Activated CD4-positive, alpha-beta memory T cell treated with anti-CD3 and anti-CD28 coated beads for 36 hours (primary cell): ENCODE measurements at regions of chr6 and their contacts with region 1.

Region 1: DNA sequence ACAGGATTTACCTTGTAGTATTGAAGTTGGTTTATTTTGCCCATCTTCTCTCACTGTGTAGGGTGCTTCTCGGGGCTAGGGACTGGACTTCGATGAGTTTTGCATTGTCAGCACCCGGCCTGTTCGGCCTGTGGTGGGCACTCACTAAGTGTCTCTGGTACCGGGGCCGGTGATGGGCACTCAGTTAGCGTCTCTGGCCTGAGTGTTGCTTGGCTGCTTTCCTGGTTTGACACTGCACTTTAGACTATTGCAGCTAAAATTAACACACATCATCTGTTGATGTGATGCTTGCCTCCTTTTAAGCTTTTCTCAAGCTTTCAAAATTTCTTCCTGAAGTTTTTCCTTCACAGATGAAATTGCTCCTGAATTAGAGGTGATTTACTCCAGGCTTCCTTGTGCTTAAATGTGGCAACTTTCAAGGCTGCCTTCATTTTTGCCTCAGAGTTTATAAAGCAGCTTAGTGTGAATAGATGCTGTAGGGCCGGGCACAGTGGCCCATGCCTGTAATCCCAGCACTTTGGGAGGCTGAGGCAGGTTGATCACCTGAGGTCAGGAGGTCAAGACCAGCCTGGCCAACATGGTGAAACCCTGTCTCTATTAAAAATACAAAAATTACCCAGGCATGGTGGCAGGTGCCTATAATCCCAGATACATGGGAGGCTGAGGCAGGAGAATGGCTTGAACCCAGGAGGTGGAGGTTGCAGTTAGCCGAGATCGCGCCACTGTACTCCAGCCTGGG is 41.7 kb upstream of the TULP4 start:
- DNase-seq: peak; percentile 46
- H3K4me3 Mint-ChIP-seq: no peak overlapping the region
- H3K27ac Mint-ChIP-seq: no peak overlapping the region
- H3K4me1 Mint-ChIP-seq: peaks cover 27% of the 10 kb centered on the region
- H3K27me3 Mint-ChIP-seq: no peaks in the 10 kb centered on the region

Region 2: GRCh38 chr6:156557251-156557910 is 1713.2 kb before region 1 on chr6:
- CTCF ChIA-PET with region 1: no interaction called
- POLR2A ChIA-PET with region 1: no interaction called
- intact Hi-C with region 1: no loop called
- DNase-seq: no peak
- H3K4me3 Mint-ChIP-seq: no peak overlapping the region
- H3K27ac Mint-ChIP-seq: no peak overlapping the region
- H3K4me1 Mint-ChIP-seq: no peaks in the 10 kb centered on the region
- H3K27me3 Mint-ChIP-seq: peaks cover 7% of the 10 kb centered on the region

Region 3: DNA sequence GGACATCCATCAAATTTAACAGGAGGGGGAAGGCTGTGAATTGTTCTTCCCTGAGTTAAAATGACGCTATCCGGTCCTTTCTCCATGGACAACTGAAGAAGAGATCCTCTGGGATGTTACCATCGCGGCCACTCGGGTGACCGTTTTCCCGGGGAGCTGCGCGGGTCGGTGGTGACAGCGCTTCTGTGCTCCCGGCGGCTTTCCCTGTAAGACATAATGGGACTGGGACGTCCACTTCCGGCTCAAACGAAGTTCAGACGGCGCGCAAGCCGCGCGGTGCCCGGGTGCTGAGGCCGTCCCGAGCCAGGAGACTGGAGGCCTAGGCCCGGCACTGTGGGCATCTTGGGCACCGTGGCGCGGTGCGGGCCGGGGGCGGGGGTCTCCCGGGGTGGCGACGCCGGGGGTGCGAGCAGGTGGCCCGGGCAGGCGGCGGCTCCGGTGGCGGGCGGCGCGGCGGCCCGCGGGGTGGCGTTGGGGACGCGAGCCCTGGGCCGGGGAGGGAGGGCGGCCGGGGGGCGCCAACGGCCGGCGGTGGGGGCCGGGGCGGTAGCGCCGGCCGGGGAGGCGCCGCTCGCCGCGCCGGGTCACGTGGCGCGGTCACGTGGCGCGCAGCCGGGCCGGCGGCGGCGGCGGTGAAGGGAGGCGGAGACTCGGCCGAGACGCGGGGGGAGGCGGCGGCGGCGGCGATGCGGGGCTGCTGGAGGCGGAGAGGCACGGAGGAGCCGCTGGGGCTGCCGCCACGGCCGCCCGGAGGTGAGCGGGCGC is 38.8 kb before region 1 on chr6:
- CTCF ChIA-PET with region 1: no interaction called
- POLR2A ChIA-PET with region 1: no interaction called
- intact Hi-C with region 1: loop called (anchors 2 kb)
- DNase-seq: peak; percentile 76
- H3K4me3 Mint-ChIP-seq: peak overlapping the region; percentile 81
- H3K27ac Mint-ChIP-seq: peak overlapping the region; percentile 46
- H3K4me1 Mint-ChIP-seq: peaks cover 31% of the 10 kb centered on the region
- H3K27me3 Mint-ChIP-seq: no peaks in the 10 kb centered on the region

Region 4: GRCh38 chr6:158283304-158283980 is 12.9 kb after region 1 on chr6:
- CTCF ChIA-PET with region 1: no interaction called
- POLR2A ChIA-PET with region 1: no interaction called
- intact Hi-C with region 1: loop called (anchors 1 kb)
- DNase-seq: peak; percentile 50
- H3K4me3 Mint-ChIP-seq: peak overlapping the region; percentile 1
- H3K27ac Mint-ChIP-seq: peak overlapping the region; percentile 28
- H3K4me1 Mint-ChIP-seq: peaks cover 37% of the 10 kb centered on the region
- H3K27me3 Mint-ChIP-seq: no peaks in the 10 kb centered on the region

Region 5: GRCh38 chr6:158290659-158291058 is 20.1 kb after region 1 on chr6:
- CTCF ChIA-PET with region 1: interaction called, 3 read pairs
- POLR2A ChIA-PET with region 1: no interaction called
- intact Hi-C with region 1: loop called (anchors 1 kb)
- DNase-seq: peak; percentile 75
- H3K4me3 Mint-ChIP-seq: peak overlapping the region; percentile 50
- H3K27ac Mint-ChIP-seq: peak overlapping the region; percentile 79
- H3K4me1 Mint-ChIP-seq: peaks cover 37% of the 10 kb centered on the region
- H3K27me3 Mint-ChIP-seq: no peaks in the 10 kb centered on the region

Region 6: GRCh38 chr6:158322724-158323560 is 52.4 kb after region 1 on chr6:
- CTCF ChIA-PET with region 1: no interaction called
- POLR2A ChIA-PET with region 1: no interaction called
- intact Hi-C with region 1: loop called (anchors 5 kb)
- DNase-seq: no peak
- H3K4me3 Mint-ChIP-seq: no peak overlapping the region
- H3K27ac Mint-ChIP-seq: no peak overlapping the region
- H3K4me1 Mint-ChIP-seq: peaks cover 49% of the 10 kb centered on the region
- H3K27me3 Mint-ChIP-seq: no peaks in the 10 kb centered on the region

Region 7: GRCh38 chr6:158344534-158344933 is 74.0 kb after region 1 on chr6:
- CTCF ChIA-PET with region 1: no interaction called
- POLR2A ChIA-PET with region 1: interaction called, 5 read pairs
- intact Hi-C with region 1: loop called (anchors 5 kb)
- DNase-seq: peak; percentile 66
- H3K4me3 Mint-ChIP-seq: no peak overlapping the region
- H3K27ac Mint-ChIP-seq: peak overlapping the region; percentile 9
- H3K4me1 Mint-ChIP-seq: peaks cover 22% of the 10 kb centered on the region
- H3K27me3 Mint-ChIP-seq: no peaks in the 10 kb centered on the region